Aorta (tissue), 5 donors: ENCODE measurements at regions of chr10 and their contacts with region 1.

Region 1: GRCh38 chr10:77926566-77927401 is at the start of gene DLG5:
- DNase-seq: peak; percentile 69 to 91
- ATAC-seq: peak; percentile 87
- H3K4me3 ChIP-seq: peak within 1 kb of the TSS; percentile 71 to 97
- H3K27ac ChIP-seq: peak within 1 kb of the TSS; percentile 44 to 55
- H3K4me1 ChIP-seq: no peaks in the 10 kb centered on the region
- H3K27me3 ChIP-seq: no peaks in the 10 kb centered on the region
- total RNA-seq, gene DLG5: 50.5 to 70.6 TPM

Region 2: DNA sequence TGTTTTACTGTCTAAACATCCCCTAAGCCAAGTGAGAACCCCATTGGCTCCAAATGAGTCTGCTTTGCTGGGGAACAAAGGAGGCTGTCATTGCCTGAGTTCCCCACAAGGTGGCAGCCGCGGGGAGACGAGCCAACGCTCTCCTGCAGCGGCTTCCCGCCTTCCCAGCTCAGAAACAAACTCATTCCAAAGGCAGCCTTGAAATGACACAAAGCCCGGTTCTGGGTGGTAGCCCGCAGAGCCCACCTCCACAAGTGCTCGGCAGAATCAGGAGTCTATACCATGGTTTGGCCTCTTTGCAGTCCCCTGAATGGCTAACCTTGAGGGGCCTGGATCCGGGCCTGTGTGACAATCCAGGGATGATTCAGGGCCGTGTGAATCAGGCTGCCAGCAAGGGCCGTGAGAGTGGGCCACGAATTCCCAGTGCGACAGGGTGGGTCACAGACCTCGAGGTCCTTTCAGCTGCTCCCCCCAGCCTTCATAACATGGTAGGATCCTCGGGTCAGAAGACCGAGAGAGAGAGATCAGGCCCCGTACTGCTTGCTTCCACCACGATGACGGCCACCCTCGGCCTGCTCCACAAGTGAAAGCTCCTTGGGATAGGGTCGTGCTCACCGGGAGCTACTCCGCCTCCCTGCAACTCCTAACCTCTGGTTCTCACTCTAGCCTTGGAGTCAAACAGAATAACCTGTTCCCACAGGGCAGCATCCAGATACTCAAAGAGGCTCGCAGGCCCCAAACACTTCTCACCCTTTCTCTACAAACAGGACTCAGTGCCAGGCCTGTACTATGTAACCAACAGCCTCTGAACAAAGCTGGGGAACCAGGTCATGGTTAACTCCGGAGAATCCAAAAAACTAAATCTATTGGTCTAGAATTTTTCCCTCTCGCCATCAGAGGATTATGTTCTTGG is 79.8 kb before region 1 on chr10:
- intact Hi-C with region 1: loop called (anchors 5 kb)
- DNase-seq: peak; percentile 76 to 92
- ATAC-seq: peak; percentile 85
- H3K4me3 ChIP-seq: no peak overlapping the region
- H3K27ac ChIP-seq: peak overlapping the region in 1 of 2 donors; percentile 2
- H3K4me1 ChIP-seq: no peaks in the 10 kb centered on the region
- H3K27me3 ChIP-seq: no peaks in the 10 kb centered on the region

Region 3: GRCh38 chr10:77965294-77965693 is 38.5 kb after region 1 on chr10:
- intact Hi-C with region 1: loop called (anchors 2 to 5 kb)
- DNase-seq: peak in 1 of 2 donors; percentile 3
- ATAC-seq: no peak
- H3K4me3 ChIP-seq: no peak overlapping the region
- H3K27ac ChIP-seq: no peak overlapping the region
- H3K4me1 ChIP-seq: no peaks in the 10 kb centered on the region
- H3K27me3 ChIP-seq: no peaks in the 10 kb centered on the region

Region 4: GRCh38 chr10:77970869-77971803 is 44.4 kb after region 1 on chr10:
- intact Hi-C with region 1: loop called (anchors 2 to 5 kb)
- DNase-seq: peak; percentile 82 to 86
- ATAC-seq: peak; percentile 87
- H3K4me3 ChIP-seq: no peak overlapping the region
- H3K27ac ChIP-seq: peak overlapping the region; percentile 9 to 53
- H3K4me1 ChIP-seq: peaks cover 3% of the 10 kb centered on the region in 2 donors
- H3K27me3 ChIP-seq: no peaks in the 10 kb centered on the region

Region 5: GRCh38 chr10:77989081-77989724 is 62.4 kb after region 1 on chr10:
- intact Hi-C with region 1: loop called (anchors 5 kb)
- DNase-seq: peak; percentile 75 to 85
- ATAC-seq: peak; percentile 73
- H3K4me3 ChIP-seq: no peak overlapping the region
- H3K27ac ChIP-seq: peak overlapping the region; percentile 71 to 98
- H3K4me1 ChIP-seq: peaks cover 5 to 8% of the 10 kb centered on the region in 2 donors
- H3K27me3 ChIP-seq: no peaks in the 10 kb centered on the region

Region 6: GRCh38 chr10:78231939-78232338 is 305.2 kb after region 1 on chr10:
- intact Hi-C with region 1: no loop called
- DNase-seq: peak in 1 of 2 donors; percentile 16
- ATAC-seq: no peak
- H3K4me3 ChIP-seq: no peak overlapping the region
- H3K27ac ChIP-seq: no peak overlapping the region
- H3K4me1 ChIP-seq: no peaks in the 10 kb centered on the region
- H3K27me3 ChIP-seq: no peaks in the 10 kb centered on the region